ENCODE measurements at regions of chr2 and their contacts with region 1.

Region 1: GRCh38 chr2:231104115-231104713 is 20.6 kb downstream of the HTR2B start:
- DNase-seq: peak; percentile 6 to 21
- ATAC-seq: peak; percentile 60 to 76
- H3K4me3 ChIP-seq: no peak overlapping the region
- H3K27ac ChIP-seq: peak overlapping the region in 2 of 4 donors; percentile 47 to 53
- H3K4me1 ChIP-seq: peaks cover 0 to 5% of the 10 kb centered on the region in 2 donors
- H3K27me3 ChIP-seq: no peaks in the 10 kb centered on the region
- CTCF ChIP-seq: peak; percentile 36 to 86 (median 71)
- POLR2A ChIP-seq: no peak

Region 2: GRCh38 chr2:231000211-231000904 is 103.9 kb before region 1 on chr2:
- in situ Hi-C with region 1: no loop called
- intact Hi-C with region 1: no loop called
- DNase-seq: no peak
- ATAC-seq: no peak
- H3K4me3 ChIP-seq: no peak overlapping the region
- H3K27ac ChIP-seq: no peak overlapping the region
- H3K4me1 ChIP-seq: no peaks in the 10 kb centered on the region
- H3K27me3 ChIP-seq: peaks cover 8 to 19% (median 12%) of the 10 kb centered on the region in 3 donors
- CTCF ChIP-seq: no peak
- POLR2A ChIP-seq: no peak

Region 3: DNA sequence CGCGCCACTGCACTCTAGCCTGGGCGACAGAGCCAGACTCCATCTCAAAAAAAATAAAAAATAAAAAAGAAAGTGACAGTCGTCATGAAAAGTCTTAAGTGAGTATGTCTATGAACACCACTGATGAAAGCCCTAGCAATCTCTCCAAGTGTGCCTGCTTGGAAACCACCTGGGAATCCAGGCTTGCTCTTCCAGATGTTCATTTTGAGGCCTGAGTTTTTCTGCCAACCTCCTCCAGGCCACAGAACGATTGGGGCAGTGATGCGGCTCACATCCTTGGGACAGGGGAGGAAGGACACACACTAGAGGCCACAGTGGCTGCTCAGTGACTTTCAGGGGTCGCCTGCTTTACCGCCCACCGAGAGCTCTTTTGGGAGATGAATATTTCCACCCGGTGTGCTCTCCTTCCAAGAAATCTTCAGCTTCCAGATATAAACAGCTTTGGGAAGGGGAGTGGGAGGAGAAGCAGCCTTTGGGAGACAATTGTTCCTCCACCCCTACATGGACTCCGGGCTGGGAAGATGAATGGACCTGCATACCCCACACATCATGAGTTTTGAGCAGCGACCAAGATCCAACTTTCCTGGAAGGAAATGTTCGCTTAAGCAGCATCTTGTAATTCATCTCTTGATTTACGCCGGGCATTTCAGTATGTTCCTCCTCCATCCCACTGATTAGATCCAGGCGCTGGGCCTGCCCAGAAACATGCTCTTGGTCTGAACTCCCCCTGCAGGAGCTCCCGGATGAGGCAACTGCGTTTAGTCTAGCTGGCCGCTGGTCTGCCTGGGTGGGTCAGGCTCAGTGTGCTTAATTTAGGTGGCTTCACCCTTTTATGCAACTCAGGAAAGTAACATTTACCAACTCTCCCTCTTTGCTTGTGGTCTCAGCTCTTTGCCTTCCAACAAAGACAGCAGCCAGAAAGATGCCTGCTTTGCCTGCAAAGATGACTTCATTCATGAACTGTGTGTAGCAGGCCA is 88.0 kb after region 1 on chr2:
- in situ Hi-C with region 1: no loop called
- intact Hi-C with region 1: loop called (anchors 5 kb)
- DNase-seq: peak in 1 of 2 donors; percentile 23
- ATAC-seq: no peak
- H3K4me3 ChIP-seq: no peak overlapping the region
- H3K27ac ChIP-seq: peak overlapping the region in 1 of 4 donors; percentile 20
- H3K4me1 ChIP-seq: peaks cover 10 to 11% of the 10 kb centered on the region in 2 donors
- H3K27me3 ChIP-seq: no peaks in the 10 kb centered on the region
- CTCF ChIP-seq: peak in 3 of 5 experiments; percentile 39 to 42 (median 40)
- POLR2A ChIP-seq: no peak

Region 4: GRCh38 chr2:231204581-231204980 is 100.4 kb after region 1 on chr2:
- in situ Hi-C with region 1: no loop called
- intact Hi-C with region 1: no loop called
- DNase-seq: no peak
- ATAC-seq: no peak
- H3K4me3 ChIP-seq: no peak overlapping the region
- H3K27ac ChIP-seq: no peak overlapping the region
- H3K4me1 ChIP-seq: no peaks in the 10 kb centered on the region
- H3K27me3 ChIP-seq: no peaks in the 10 kb centered on the region
- CTCF ChIP-seq: no peak
- POLR2A ChIP-seq: no peak

Region 5: DNA sequence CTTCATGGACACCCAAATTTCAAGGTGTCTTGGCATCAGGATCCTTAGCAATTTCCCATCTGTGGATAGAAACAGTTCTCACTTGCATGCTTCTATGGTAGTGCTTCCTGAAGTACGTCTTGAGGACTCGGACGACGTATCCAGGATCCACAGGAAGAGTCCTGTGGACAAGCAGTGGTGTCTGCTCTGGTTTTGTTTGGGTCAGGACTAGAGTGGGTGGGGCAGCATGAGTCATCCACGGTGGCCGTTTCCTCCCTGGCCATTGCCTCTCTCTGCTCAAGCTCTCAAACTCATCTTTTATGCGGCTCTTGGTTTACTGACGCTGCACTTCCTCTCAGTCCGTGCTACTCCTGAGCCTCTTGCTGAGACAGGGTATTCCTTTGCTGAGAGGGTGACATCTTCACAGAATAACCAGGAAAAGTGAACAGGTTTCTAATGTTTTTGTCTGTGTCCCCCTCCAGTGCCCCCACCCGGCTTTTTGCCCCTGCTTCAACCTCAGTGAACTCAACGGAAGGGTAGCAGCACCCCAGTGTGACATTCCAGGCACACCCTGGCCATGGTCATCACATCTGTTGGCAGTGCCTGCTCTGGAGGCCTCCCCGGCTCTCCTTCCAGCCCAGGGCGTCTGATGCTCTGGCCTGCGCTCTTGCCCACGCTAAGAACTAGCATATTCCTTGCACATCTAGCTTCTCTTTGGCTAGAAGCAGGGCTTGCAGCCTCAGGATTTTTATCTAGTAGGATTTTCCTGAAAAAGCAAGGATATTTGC is 156.4 kb after region 1 on chr2:
- in situ Hi-C with region 1: no loop called
- intact Hi-C with region 1: no loop called
- DNase-seq: peak in 1 of 2 donors; percentile 16
- ATAC-seq: no peak
- H3K4me3 ChIP-seq: no peak overlapping the region
- H3K27ac ChIP-seq: no peak overlapping the region
- H3K4me1 ChIP-seq: no peaks in the 10 kb centered on the region
- H3K27me3 ChIP-seq: no peaks in the 10 kb centered on the region
- CTCF ChIP-seq: no peak
- POLR2A ChIP-seq: no peak

Region 6: DNA sequence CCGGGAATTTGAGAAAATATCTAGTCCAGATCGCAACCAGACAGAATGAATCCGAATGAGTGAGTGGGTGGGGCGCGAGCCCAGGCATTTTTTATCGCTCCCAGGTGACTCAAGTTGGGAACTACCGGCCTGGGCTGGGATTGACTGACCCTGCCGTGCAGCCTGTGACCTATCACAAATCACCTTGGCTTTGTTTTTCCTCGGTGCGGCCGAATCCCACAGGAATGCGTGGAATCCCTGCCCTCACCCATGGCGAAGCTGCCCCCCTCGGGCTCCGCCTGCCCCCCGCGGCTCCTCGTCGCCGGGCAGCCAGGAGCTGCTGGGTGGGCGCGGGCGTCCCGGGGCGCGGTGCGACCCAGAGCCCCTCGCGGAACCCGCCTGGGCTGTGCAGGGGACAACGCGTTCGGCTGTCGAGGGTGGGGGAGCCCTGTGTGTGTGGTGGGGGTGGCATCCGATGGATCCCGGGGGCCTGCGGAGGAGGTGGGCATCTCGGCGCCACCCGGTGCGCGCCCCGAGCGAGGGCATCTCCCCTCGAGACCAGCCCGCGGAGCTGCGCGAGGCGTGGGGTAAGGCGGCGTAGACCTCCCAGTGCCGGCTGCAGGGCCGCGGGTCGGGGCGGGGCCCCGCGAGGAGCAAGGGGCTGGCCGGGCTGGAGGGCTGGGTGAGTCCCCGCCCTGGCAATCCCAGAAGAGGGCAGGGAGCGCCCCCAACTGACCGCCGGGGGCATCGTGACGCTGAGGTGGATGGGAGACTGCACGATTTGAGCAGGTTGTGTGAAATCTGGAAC is 307.8 kb after region 1 on chr2:
- in situ Hi-C with region 1: loop called in 2 of 4 experiments (anchors 10 to 25 kb)
- intact Hi-C with region 1: loop called (anchors 1 kb)
- DNase-seq: peak; percentile 45 to 53
- ATAC-seq: peak; percentile 61 to 76
- H3K4me3 ChIP-seq: peak overlapping the region; percentile 47 to 58 (median 50)
- H3K27ac ChIP-seq: no peak overlapping the region
- H3K4me1 ChIP-seq: peaks cover 0 to 5% of the 10 kb centered on the region in 2 donors
- H3K27me3 ChIP-seq: peaks cover 0 to 7% (median 0%) of the 10 kb centered on the region in 3 donors
- CTCF ChIP-seq: peak in 4 of 5 experiments; percentile 40 to 66 (median 64)
- POLR2A ChIP-seq: no peak

Region 7: DNA sequence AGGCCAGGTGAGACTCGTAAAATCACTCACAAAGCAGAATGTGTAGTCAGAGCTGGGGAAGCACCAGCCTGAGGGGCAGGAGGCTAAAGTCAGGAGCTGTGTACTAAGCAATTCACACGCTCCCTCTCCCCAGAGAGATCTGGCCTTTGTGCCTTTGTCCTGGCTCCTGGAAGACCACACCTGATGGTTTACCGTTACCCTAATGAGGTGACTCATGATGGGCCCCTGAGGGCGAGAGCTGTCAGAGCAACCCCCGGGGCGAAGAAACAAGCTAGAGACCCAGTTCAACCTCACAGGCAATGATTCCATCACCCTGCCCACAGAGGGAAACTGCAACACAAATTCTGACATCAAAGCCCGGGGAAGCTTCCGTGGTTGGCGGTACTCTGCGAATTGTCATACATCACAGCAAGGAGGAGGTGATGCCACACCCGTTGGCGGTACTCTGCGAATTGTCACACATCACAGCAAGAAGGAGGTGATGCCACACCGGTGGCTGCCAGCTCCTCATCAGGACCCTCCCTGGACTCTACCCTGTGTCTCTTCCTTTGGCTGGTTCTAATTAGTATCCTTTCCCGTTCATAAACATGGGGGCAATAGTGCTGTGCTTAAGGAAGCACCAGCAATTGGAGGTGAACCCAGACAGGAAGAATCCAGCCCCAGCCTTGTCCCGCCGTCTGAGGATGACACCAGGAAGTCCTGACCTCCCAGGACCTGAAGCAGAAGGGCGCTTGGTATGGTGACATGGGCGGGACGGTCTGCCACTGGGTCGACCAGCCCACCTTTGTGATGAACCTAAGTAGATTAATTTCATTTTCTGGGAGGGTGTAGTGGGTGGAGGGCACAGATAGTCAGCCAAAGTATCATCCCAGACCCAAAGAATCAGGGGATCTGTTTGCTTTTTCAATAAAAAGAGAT is 321.9 kb after region 1 on chr2:
- in situ Hi-C with region 1: loop called in 2 of 4 experiments (anchors 25 kb)
- intact Hi-C with region 1: no loop called
- DNase-seq: no peak
- ATAC-seq: no peak
- H3K4me3 ChIP-seq: no peak overlapping the region
- H3K27ac ChIP-seq: no peak overlapping the region
- H3K4me1 ChIP-seq: no peaks in the 10 kb centered on the region
- H3K27me3 ChIP-seq: no peaks in the 10 kb centered on the region
- CTCF ChIP-seq: no peak
- POLR2A ChIP-seq: no peak

Region 8: DNA sequence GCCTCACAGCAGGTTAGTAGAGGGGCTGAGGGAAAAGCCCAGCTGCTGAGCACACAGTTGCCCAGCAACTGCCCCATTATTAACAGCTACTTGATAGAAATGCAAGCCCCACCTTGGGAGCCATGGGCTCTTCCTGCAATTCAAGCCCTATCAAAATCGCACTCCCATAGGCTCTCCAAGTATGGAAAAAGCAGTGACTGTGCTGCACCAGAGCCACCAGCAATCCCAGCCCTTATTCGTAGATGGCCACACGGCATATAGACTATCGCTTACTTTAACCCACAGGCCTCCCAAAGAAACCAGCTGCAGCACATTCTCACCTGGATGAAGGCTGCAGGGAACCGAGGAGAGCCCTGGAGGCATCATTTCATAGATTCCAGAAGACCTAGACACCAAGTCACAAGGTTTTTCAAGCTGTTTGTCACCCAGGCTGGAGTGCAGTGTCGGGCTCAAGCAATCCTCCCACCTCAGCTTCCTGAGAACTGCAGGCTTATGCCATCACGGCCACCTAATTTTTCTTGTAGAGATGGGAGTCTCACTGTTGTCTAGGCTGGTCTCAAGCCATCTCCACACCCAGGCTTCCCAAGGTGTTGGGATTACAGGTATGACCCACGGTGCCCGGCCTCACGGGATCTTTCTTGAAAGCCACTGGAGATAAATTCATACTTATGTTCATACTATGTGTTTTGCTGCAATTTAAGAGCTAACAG is 348.7 kb after region 1 on chr2:
- in situ Hi-C with region 1: loop called in 2 of 4 experiments (anchors 25 kb)
- intact Hi-C with region 1: loop called (anchors 5 kb)
- DNase-seq: no peak
- ATAC-seq: no peak
- H3K4me3 ChIP-seq: no peak overlapping the region
- H3K27ac ChIP-seq: no peak overlapping the region
- H3K4me1 ChIP-seq: no peaks in the 10 kb centered on the region
- H3K27me3 ChIP-seq: no peaks in the 10 kb centered on the region
- CTCF ChIP-seq: no peak
- POLR2A ChIP-seq: no peak

Region 9: GRCh38 chr2:231463698-231464575 is 359.7 kb after region 1 on chr2 and contains the start of gene NCL:
- in situ Hi-C with region 1: loop called in 1 of 4 experiments (anchors 25 kb)
- intact Hi-C with region 1: no loop called
- DNase-seq: peak; percentile 66 to 81
- ATAC-seq: peak; percentile 90 to 92
- H3K4me3 ChIP-seq: peak within 1 kb of the TSS; percentile 75 to 99 (median 96)
- H3K27ac ChIP-seq: peak within 1 kb of the TSS; percentile 94 to 98 (median 96)
- H3K4me1 ChIP-seq: peaks cover 26 to 31% of the 10 kb centered on the region in 2 donors
- H3K27me3 ChIP-seq: no peaks in the 10 kb centered on the region
- CTCF ChIP-seq: no peak
- POLR2A ChIP-seq: peak; percentile 98
- total RNA-seq, gene NCL: 48.8 to 174 (median 124) TPM

Measured in gastrocnemius medialis (tissue), 4 donors.